MCF 10A (cell line): ENCODE measurements at regions of chr4 and their contacts with region 1.

Region 1: DNA sequence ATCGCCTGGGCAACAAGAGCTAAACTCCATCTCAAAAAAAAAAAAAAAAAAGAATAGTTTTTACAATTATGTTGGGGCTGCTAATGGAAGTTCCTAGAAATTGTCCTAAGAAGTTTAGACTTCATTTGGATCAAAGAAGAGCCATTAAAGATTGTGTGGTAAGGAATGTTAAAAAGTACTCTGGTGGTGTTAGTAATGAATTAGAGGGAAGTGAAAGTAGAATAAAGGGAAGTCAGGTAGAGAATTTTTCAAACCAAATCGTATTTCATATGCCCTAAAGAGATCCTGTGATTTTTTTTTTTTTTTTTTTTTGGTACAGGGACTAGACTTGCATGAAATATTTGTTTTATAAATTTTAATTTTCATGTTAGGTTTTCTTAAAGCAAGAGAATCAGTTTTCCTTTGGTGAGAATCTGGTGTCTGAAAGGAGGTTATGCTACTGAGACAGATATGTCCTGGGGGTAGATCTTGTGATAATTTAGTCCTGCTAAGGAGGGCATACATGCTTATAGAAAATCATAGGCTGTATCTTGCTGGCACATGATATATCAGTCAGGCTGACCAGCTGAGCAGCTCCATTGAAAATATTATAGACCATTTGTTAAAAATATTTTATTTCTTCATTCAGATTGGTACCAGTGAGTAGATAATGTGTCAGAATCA is 10.7 kb downstream of the SEC24B start:
- DNase-seq: no peak
- H3K4me3 Mint-ChIP-seq: no peak overlapping the region
- H3K27ac Mint-ChIP-seq: peak overlapping the region; percentile 76
- H3K4me1 Mint-ChIP-seq: peaks cover 50% of the 10 kb centered on the region
- H3K27me3 Mint-ChIP-seq: no peaks in the 10 kb centered on the region
- CTCF ChIP-seq: no peak

Region 2: DNA sequence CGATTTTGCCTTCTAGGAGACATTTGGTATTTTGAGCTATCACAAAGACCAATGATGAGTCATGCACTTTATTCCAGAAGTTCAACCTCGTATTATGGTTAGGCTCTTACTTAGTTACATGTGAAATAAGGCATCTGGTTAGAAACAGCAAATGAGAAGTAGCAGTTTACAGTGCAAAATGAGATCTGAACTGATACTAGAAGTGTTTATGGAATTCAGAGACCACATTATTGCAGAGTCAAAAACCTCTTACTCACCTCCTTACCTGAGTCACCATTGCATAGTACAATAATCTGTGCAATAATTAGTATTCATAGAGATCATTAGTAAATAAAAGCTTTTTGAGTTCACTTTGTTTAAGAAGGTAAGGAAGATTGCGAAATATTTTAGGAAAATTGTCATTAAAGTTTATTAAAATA is 28.0 kb after region 1 on chr4:
- CTCF ChIA-PET with region 1: no interaction called
- POLR2A ChIA-PET with region 1: interaction called, 15 read pairs
- intact Hi-C with region 1: no loop called
- DNase-seq: peak; percentile 61
- H3K4me3 Mint-ChIP-seq: no peak overlapping the region
- H3K27ac Mint-ChIP-seq: no peak overlapping the region
- H3K4me1 Mint-ChIP-seq: peaks cover 18% of the 10 kb centered on the region
- H3K27me3 Mint-ChIP-seq: no peaks in the 10 kb centered on the region
- CTCF ChIP-seq: no peak